PC-9 (cell line): ENCODE measurements at regions of chr1 and their contacts with region 1.

Region 1: DNA sequence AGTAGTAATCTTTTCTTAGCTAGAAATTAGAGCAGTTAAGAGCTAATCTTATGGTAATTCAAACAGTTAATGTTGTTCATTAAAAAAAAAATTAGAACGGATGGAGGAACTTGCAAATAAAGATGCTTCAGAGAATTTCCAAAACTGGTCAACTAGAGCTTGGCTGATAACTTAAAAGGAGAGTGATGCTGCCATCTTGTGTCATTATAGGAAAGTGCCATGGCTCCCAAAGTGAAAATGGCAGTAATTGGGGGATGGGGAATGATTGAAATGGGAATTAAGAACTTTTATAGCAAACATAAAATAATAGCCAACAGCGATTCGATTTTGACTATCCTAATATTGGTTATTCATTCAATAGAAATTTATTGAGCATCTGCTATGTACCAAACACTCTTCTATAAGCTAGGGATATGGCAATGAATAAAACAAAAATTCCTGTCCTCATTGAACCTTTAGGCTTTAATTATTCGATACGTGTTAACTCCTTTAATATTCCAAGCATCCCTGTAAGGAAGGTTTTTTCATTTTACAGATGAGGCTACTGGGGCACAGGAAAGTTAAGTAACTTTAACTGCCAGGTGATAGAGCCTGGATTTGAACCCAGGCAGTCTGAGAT is 5.7 kb upstream of the PLPP3 start:
- DNase-seq: peak; percentile 34 to 57
- H3K4me3 ChIP-seq: no peak overlapping the region
- H3K27ac ChIP-seq: no peak overlapping the region
- H3K4me1 ChIP-seq: peaks cover 9% of the 10 kb centered on the region
- H3K27me3 ChIP-seq: no peaks in the 10 kb centered on the region
- CTCF ChIP-seq: peak; percentile 86

Region 2: GRCh38 chr1:55140546-55140983 is 1444.5 kb before region 1 on chr1:
- CTCF ChIA-PET with region 1: no interaction called
- POLR2A ChIA-PET with region 1: no interaction called
- intact Hi-C with region 1: loop called (anchors 2 kb)
- DNase-seq: peak; percentile 43 to 65
- H3K4me3 ChIP-seq: no peak overlapping the region
- H3K27ac ChIP-seq: no peak overlapping the region
- H3K4me1 ChIP-seq: no peaks in the 10 kb centered on the region
- H3K27me3 ChIP-seq: no peaks in the 10 kb centered on the region
- CTCF ChIP-seq: peak; percentile 80

Region 3: GRCh38 chr1:55506686-55507577 is 1078.1 kb before region 1 on chr1:
- CTCF ChIA-PET with region 1: no interaction called
- POLR2A ChIA-PET with region 1: no interaction called
- intact Hi-C with region 1: loop called (anchors 10 kb)
- DNase-seq: peak; percentile 16 to 80
- H3K4me3 ChIP-seq: no peak overlapping the region
- H3K27ac ChIP-seq: peak overlapping the region; percentile 45
- H3K4me1 ChIP-seq: peaks cover 39% of the 10 kb centered on the region
- H3K27me3 ChIP-seq: no peaks in the 10 kb centered on the region
- CTCF ChIP-seq: no peak; the same call in 1 of the 2 replicates

Region 4: DNA sequence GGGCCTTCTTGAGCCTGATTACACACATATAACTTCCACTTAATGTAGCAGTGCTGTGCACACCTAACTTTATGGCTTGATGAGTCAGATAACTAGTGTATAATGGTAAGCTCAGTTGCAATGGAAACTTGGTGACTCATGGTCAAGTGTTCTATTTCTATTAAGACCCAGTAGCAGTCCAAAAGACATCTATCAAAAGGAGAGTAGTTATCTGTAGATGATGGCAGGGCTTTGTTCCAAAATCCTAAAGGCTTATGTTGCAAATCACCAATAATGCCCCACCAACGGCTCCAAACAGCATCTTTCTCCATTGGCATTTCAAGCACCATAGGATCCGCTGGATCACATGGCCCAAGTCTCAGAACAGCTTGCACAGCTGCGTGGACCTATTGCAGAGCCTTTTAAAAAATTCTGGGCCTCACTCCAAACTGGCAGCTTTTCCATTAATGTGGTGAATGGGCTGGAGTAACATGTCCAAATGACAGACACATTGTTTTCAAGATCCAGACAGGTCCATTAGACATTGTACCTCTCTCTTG is 803.0 kb before region 1 on chr1:
- CTCF ChIA-PET with region 1: interaction called, 10 read pairs
- POLR2A ChIA-PET with region 1: no interaction called
- intact Hi-C with region 1: no loop called
- DNase-seq: peak in 1 of 2 experiments; percentile 77
- H3K4me3 ChIP-seq: no peak overlapping the region
- H3K27ac ChIP-seq: no peak overlapping the region
- H3K4me1 ChIP-seq: peaks cover 47% of the 10 kb centered on the region
- H3K27me3 ChIP-seq: no peaks in the 10 kb centered on the region
- CTCF ChIP-seq: no peak

Region 5: GRCh38 chr1:55868026-55868425 is 717.0 kb before region 1 on chr1:
- CTCF ChIA-PET with region 1: no interaction called
- POLR2A ChIA-PET with region 1: interaction called, 10 read pairs
- intact Hi-C with region 1: no loop called
- DNase-seq: no peak
- H3K4me3 ChIP-seq: no peak overlapping the region
- H3K27ac ChIP-seq: no peak overlapping the region
- H3K4me1 ChIP-seq: no peaks in the 10 kb centered on the region
- H3K27me3 ChIP-seq: no peaks in the 10 kb centered on the region
- CTCF ChIP-seq: no peak

Region 6: DNA sequence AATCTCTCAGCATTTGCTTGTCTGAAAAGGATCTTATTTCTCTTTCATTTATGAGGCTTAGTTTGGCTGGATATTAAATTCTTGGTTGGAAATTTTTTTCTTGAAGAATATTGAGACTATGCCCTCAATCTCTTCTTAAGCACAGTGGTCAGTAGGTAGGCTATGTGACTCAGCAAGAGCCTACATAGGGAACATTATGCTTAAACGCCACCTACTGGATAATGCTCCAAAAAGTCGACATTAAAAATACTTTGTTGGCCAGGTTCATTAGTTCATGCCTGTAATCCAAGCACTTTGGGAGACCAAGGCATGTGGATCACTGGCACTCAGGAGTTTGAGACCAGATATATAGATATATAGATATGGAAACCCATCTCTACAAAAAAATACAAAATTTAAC is 691.9 kb before region 1 on chr1:
- CTCF ChIA-PET with region 1: no interaction called
- POLR2A ChIA-PET with region 1: no interaction called
- intact Hi-C with region 1: loop called (anchors 5 kb)
- DNase-seq: peak in 1 of 2 experiments; percentile 43
- H3K4me3 ChIP-seq: no peak overlapping the region
- H3K27ac ChIP-seq: no peak overlapping the region
- H3K4me1 ChIP-seq: peaks cover 5% of the 10 kb centered on the region
- H3K27me3 ChIP-seq: no peaks in the 10 kb centered on the region
- CTCF ChIP-seq: peak; percentile 60

Region 7: GRCh38 chr1:56821140-56821797 is 236.2 kb after region 1 on chr1:
- CTCF ChIA-PET with region 1: no interaction called
- POLR2A ChIA-PET with region 1: no interaction called
- intact Hi-C with region 1: loop called (anchors 2 kb)
- DNase-seq: peak in 1 of 2 experiments; percentile 81
- H3K4me3 ChIP-seq: no peak overlapping the region
- H3K27ac ChIP-seq: no peak overlapping the region
- H3K4me1 ChIP-seq: peaks cover 11% of the 10 kb centered on the region; the same call in 1 of the 2 replicates
- H3K27me3 ChIP-seq: no peaks in the 10 kb centered on the region
- CTCF ChIP-seq: peak; percentile 96

Region 8: GRCh38 chr1:56911098-56911938 is 326.3 kb after region 1 on chr1:
- CTCF ChIA-PET with region 1: no interaction called
- POLR2A ChIA-PET with region 1: no interaction called
- intact Hi-C with region 1: no loop called
- DNase-seq: peak in 1 of 2 experiments; percentile 44
- H3K4me3 ChIP-seq: no peak overlapping the region
- H3K27ac ChIP-seq: no peak overlapping the region
- H3K4me1 ChIP-seq: no peaks in the 10 kb centered on the region
- H3K27me3 ChIP-seq: peaks cover 13% of the 10 kb centered on the region
- CTCF ChIP-seq: no peak